ENCODE measurements at regions of chr11 and their contacts with region 1.

Region 1: GRCh38 chr11:66008468-66009101 is 3.2 kb upstream of the CST6 start:
- DNase-seq: no peak
- H3K4me3 ChIP-seq: no peak overlapping the region
- H3K27ac ChIP-seq: no peak overlapping the region
- H3K27me3 ChIP-seq: peaks cover 0 to 21% (median 12%) of the 10 kb centered on the region in 45 donors
- CTCF ChIP-seq: no peak

Region 2: DNA sequence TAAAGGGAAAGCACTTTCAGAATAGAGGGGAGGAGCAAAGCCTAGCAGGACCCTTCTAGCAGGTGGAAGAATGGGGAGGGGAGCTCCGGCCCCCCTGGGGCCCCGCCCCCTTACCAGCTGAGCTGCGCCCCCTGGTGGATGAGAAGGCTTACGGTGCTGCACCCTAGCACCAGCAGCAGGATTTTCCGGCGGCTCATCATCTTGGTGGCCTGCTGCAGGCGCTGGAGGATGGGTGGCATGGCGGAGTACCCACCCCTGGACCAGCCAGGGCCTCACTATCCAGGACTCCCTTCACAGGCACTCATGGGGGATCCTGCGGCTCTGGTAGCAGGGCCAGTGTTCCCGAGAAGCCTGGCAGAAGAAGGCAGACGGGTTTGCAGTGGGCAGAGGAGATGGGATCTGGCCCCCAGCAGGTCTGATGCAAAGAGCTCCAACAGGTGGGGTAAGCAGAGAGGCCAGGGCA is 36.6 kb after region 1 on chr11:
- intact Hi-C with region 1: loop called in 1 of 2 experiments (anchors 5 kb)
- DNase-seq: peak; percentile 66 to 85 (median 75)
- H3K4me3 ChIP-seq: peak overlapping the region in 16 of 59 donors; percentile 4 to 39 (median 18)
- H3K27ac ChIP-seq: peak overlapping the region in 15 of 59 donors; percentile 2 to 72 (median 47)
- H3K27me3 ChIP-seq: peaks cover 0 to 3% (median 0%) of the 10 kb centered on the region in 45 donors
- CTCF ChIP-seq: peak; percentile 63 to 97 (median 92)